ENCODE measurements at regions of chr5 and their contacts with region 1.

Region 1: GRCh38 chr5:115634343-115635132 is 8.7 kb upstream of the TMED7 start:
- DNase-seq: peak; percentile 90
- H3K4me3 ChIP-seq: peak overlapping the region; percentile 13
- H3K27ac ChIP-seq: no peak overlapping the region
- H3K4me1 ChIP-seq: peaks cover 7% of the 10 kb centered on the region
- H3K27me3 ChIP-seq: no peaks in the 10 kb centered on the region
- CTCF ChIP-seq: peak; percentile 94

Region 2: GRCh38 chr5:115831163-115831768 is 196.7 kb after region 1 on chr5:
- CTCF ChIA-PET with region 1: interaction called, 5 read pairs
- POLR2A ChIA-PET with region 1: no interaction called
- intact Hi-C with region 1: loop called (anchors 2 kb)
- DNase-seq: peak; percentile 54
- H3K4me3 ChIP-seq: no peak overlapping the region
- H3K27ac ChIP-seq: no peak overlapping the region
- H3K4me1 ChIP-seq: no peaks in the 10 kb centered on the region
- H3K27me3 ChIP-seq: no peaks in the 10 kb centered on the region
- CTCF ChIP-seq: peak; percentile 78

Region 3: DNA sequence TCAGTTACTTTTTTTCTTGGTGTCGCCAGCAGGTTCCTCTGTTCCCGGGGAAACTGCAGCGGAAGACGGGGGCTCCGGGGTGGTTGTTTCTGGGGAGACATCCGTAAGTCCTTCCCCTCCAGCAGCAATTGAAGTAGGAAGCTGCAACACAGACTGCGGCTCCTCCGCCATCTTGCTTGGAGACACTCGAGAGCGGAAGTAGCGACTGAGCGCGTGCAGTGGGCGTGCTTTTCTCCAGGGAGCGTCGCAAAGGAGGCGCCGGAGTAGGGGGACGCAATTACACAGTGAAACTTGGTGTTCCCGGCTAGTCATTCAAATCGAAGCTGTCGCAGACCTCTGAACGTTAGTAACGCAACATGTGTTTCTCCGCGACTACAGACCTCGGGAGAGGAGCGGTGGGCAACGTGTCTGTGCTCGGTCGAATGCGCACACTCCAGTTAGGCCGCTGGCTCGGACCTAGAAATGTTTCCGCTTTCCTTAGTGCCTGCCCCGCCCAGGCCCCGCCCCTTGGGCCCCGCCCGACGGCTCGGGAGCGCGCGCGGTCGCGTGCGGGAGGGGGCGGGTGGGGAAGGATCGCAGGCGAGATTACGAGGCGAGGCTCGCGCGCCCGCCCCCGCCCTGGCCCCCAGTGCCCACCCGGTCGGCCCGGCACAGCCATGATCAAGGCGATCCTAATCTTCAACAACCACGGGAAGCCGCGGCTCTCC is 207.0 kb after region 1 on chr5 and contains the starts of genes AP3S1 and ATG12:
- CTCF ChIA-PET with region 1: no interaction called
- POLR2A ChIA-PET with region 1: no interaction called
- intact Hi-C with region 1: loop called (anchors 2 kb)
- DNase-seq: peak; percentile 97
- H3K4me3 ChIP-seq: peak within 1 kb of the TSS; percentile 80
- H3K27ac ChIP-seq: peak within 1 kb of the TSS; percentile 89
- H3K4me1 ChIP-seq: peaks cover 22% of the 10 kb centered on the region
- H3K27me3 ChIP-seq: no peaks in the 10 kb centered on the region
- CTCF ChIP-seq: no peak
- total RNA-seq, gene AP3S1: 66.9 and 71.8 TPM in 2 replicates
- total RNA-seq, gene ATG12: 55.8 and 59.6 TPM in 2 replicates

Region 4: GRCh38 chr5:116068028-116068632 is 433.6 kb after region 1 on chr5:
- CTCF ChIA-PET with region 1: interaction called, 3 read pairs
- POLR2A ChIA-PET with region 1: no interaction called
- intact Hi-C with region 1: loop called (anchors 2 kb)
- DNase-seq: peak; percentile 55
- H3K4me3 ChIP-seq: no peak overlapping the region
- H3K27ac ChIP-seq: no peak overlapping the region
- H3K4me1 ChIP-seq: no peaks in the 10 kb centered on the region
- H3K27me3 ChIP-seq: peaks cover 5% of the 10 kb centered on the region
- CTCF ChIP-seq: peak; percentile 84